ENCODE measurements at regions of chr5 and their contacts with region 1.

Region 1: GRCh38 chr5:13478831-13479465 is 465.5 kb downstream of the DNAH5 start:
- DNase-seq: peak in 1 of 2 experiments; percentile 32
- H3K4me3 ChIP-seq: no peak overlapping the region
- H3K27ac ChIP-seq: no peak overlapping the region
- H3K4me1 ChIP-seq: peaks cover 10% of the 10 kb centered on the region; the same call in 1 of the 2 replicates
- H3K27me3 ChIP-seq: no peaks in the 10 kb centered on the region
- CTCF ChIP-seq: peak; percentile 80

Region 2: DNA sequence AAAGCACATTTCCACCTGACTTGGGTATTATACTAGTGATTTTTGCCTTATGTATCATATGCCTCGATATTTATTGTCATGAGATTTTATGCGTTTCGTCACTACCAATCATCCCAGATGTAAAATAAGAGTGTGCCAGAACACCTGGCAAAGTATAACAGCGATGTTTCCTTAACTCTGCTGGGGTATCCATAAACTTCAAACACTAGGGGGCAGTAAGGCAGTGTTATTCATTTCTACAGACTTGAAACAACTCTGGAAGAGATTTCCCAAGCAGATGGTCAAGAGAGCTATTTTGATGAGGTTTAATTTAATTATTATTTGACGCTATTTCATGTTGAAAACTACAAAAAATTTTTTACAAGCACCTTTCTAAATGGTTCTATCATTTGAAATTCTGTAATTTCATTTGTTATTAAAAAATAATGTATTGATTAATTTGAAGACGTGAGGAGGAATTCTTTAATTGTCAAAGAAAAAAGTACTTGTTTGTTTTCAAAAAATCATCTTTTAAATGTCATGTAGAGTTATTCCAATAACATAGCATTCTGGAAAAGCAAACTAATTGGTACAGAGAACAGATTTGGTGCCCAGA is 1186.2 kb before region 1 on chr5:
- CTCF ChIA-PET with region 1: no interaction called
- POLR2A ChIA-PET with region 1: no interaction called
- intact Hi-C with region 1: loop called (anchors 2 kb)
- DNase-seq: no peak
- H3K4me3 ChIP-seq: no peak overlapping the region
- H3K27ac ChIP-seq: no peak overlapping the region
- H3K4me1 ChIP-seq: no peaks in the 10 kb centered on the region
- H3K27me3 ChIP-seq: no peaks in the 10 kb centered on the region
- CTCF ChIP-seq: peak; percentile 72

Region 3: DNA sequence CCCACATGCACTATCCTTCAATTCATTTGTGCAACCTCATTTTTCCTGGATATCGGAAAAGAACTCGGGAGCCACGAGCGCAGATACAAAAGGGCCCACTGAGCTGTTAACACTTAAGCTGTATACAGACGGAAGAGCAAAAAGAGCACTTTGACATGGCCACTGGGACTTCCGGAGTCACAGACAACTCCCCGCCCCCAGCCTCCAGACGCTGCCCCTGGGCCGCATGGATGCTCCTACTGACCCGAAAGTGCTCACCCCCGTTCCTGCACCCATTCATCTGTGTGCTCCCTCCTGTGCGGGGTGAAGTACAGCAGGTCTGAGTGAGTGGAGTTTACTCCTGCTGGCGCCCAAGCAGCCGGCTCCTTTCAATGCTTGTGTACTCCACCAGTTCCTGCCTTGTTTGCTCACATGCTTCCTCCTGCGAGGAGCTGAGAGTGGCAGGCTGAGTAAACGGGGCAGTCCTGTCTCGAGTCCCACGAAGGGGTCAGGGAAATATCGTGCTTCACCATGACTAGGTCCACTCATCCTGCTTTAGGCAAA is 673.7 kb before region 1 on chr5:
- CTCF ChIA-PET with region 1: no interaction called
- POLR2A ChIA-PET with region 1: no interaction called
- intact Hi-C with region 1: loop called (anchors 10 kb)
- DNase-seq: peak in 1 of 2 experiments; percentile 11
- H3K4me3 ChIP-seq: no peak overlapping the region
- H3K27ac ChIP-seq: no peak overlapping the region
- H3K4me1 ChIP-seq: no peaks in the 10 kb centered on the region
- H3K27me3 ChIP-seq: no peaks in the 10 kb centered on the region
- CTCF ChIP-seq: no peak

Region 4: GRCh38 chr5:13503017-13503416 is 24.1 kb after region 1 on chr5:
- CTCF ChIA-PET with region 1: no interaction called
- POLR2A ChIA-PET with region 1: no interaction called
- intact Hi-C with region 1: no loop called
- DNase-seq: no peak
- H3K4me3 ChIP-seq: no peak overlapping the region
- H3K27ac ChIP-seq: no peak overlapping the region
- H3K4me1 ChIP-seq: no peaks in the 10 kb centered on the region
- H3K27me3 ChIP-seq: no peaks in the 10 kb centered on the region
- CTCF ChIP-seq: no peak

Region 5: GRCh38 chr5:13529300-13529699 is 50.4 kb after region 1 on chr5:
- CTCF ChIA-PET with region 1: no interaction called
- POLR2A ChIA-PET with region 1: no interaction called
- intact Hi-C with region 1: no loop called
- DNase-seq: no peak
- H3K4me3 ChIP-seq: no peak overlapping the region
- H3K27ac ChIP-seq: no peak overlapping the region
- H3K4me1 ChIP-seq: no peaks in the 10 kb centered on the region
- H3K27me3 ChIP-seq: peaks cover 3% of the 10 kb centered on the region; the same call in 1 of the 2 replicates
- CTCF ChIP-seq: no peak

Region 6: GRCh38 chr5:13910637-13911288 is 431.8 kb after region 1 on chr5:
- CTCF ChIA-PET with region 1: no interaction called
- POLR2A ChIA-PET with region 1: interaction called, 11 read pairs
- intact Hi-C with region 1: no loop called
- DNase-seq: no peak
- H3K4me3 ChIP-seq: no peak overlapping the region
- H3K27ac ChIP-seq: no peak overlapping the region
- H3K4me1 ChIP-seq: no peaks in the 10 kb centered on the region
- H3K27me3 ChIP-seq: no peaks in the 10 kb centered on the region
- CTCF ChIP-seq: no peak

Region 7: GRCh38 chr5:13957032-13957645 is 478.2 kb after region 1 on chr5:
- CTCF ChIA-PET with region 1: interaction called, 4 read pairs
- POLR2A ChIA-PET with region 1: no interaction called
- intact Hi-C with region 1: loop called (anchors 5 kb)
- DNase-seq: peak in 1 of 2 experiments; percentile 51
- H3K4me3 ChIP-seq: no peak overlapping the region
- H3K27ac ChIP-seq: no peak overlapping the region
- H3K4me1 ChIP-seq: peaks cover 11% of the 10 kb centered on the region
- H3K27me3 ChIP-seq: no peaks in the 10 kb centered on the region
- CTCF ChIP-seq: peak; percentile 89